ENCODE measurements at regions of chr6 and their contacts with region 1.

Region 1: DNA sequence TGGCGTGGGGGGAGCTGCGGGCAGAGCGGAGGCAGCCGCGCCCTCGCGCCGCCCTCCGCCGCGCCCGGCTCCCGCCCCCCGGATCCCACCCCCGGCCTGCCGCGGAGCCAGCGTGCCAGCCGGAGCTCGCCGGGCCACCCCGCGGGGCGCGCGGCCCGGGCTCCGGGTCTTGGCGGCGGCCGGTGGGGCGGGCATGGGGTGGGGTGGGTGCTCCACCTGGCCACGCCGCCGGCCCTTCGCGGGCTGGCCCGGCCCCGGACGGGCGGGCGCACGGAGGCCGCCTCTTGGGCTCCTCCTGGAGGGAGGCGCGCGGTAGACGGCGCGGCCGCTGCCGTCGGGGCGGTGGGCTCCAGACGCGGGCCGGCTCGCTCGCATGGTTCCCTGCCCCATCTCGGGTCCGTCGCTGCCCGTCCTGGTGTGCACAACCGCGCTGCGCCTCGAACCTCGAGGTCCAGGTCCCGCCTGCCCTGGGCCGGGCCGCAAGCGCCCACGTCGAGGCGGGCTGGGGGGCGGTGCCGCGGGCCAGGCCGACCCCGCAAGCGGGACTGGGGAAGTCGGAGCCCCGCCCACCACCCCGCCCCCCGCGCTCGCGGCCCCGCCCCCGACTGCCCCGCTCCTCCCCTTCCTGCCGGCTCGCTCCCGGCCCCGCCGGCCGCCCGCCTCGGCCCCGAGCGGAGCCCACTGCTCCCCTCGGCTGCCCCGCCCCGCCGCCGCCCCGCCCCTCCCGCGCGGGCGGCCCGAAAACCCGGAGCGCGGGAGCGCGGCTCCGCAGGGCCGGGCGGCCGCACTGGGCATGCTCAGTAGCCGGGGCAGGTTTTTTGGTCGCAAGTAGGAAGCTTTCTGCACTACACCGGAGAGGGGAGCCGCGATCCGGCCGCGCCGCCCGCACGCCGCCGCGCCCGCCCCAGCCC is at the start of gene CDYL:
- DNase-seq: peak; percentile 93
- H3K4me3 ChIP-seq: peak within 1 kb of the TSS; percentile 64 to 79 (median 72)
- H3K27ac ChIP-seq: peak within 1 kb of the TSS; percentile 83 to 88 (median 86)
- H3K4me1 ChIP-seq: peaks cover 0 to 25% (median 20%) of the 10 kb centered on the region in 4 donors
- H3K27me3 ChIP-seq: no peaks in the 10 kb centered on the region
- CTCF ChIP-seq: peak in 1 of 4 experiments; percentile 30
- EP300 ChIP-seq: no peak
- POLR2A ChIP-seq: no peak
- total RNA-seq, gene CDYL: 37.9 to 82.8 (median 56.5) TPM

Region 2: DNA sequence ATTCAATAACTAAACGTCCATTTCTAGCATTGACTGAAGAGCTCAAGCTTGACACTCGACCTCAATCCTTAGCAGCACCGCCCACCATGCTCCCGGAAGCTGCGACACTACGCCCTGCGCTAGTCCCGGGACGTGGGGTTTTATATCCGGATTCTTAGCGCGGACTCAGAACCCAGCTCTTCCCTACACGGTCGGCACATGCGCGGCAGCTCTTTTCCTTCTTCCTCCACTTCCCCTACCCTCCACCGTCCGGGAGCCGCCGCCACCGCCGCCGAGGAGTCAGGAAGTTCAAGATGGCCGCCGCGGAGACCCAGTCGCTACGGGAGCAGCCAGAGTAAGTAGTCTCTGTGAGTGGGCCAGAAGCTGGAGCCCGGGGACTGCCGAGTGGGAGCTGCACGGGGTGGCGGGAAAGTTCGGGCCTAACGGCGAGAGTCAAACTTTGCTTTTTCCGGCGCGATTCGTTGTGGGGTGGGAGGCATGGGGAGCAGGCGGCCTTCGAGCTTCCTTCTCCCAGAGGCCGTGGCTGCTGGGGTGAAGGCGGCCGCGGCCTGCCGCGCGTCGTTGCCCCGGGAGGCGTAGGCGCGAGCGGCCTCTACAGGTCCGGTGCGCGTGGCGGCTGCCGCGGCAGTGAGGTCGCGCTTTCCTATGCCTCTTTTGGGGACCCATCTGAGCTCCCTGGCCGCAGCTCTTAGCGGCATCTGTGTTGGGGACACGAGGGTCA is 754.5 kb before region 1 on chr6:
- intact Hi-C with region 1: loop called (anchors 10 kb)
- DNase-seq: peak; percentile 98
- H3K4me3 ChIP-seq: peak overlapping the region; percentile 63 to 91 (median 80)
- H3K27ac ChIP-seq: peak overlapping the region; percentile 94 to 98 (median 98)
- H3K4me1 ChIP-seq: peaks cover 0 to 72% (median 67%) of the 10 kb centered on the region in 4 donors
- H3K27me3 ChIP-seq: no peaks in the 10 kb centered on the region
- CTCF ChIP-seq: peak in 2 of 4 experiments; percentile 10 to 36
- EP300 ChIP-seq: peak in 1 of 4 donors; percentile 34
- POLR2A ChIP-seq: peak; percentile 52 to 75

Region 3: GRCh38 chr6:4351520-4352315 is 424.1 kb before region 1 on chr6:
- intact Hi-C with region 1: loop called (anchors 2 kb)
- DNase-seq: peak; percentile 93
- H3K4me3 ChIP-seq: peak overlapping the region in 2 of 4 donors; percentile 13 to 28
- H3K27ac ChIP-seq: peak overlapping the region; percentile 82 to 88 (median 84)
- H3K4me1 ChIP-seq: peaks cover 0 to 56% (median 53%) of the 10 kb centered on the region in 4 donors
- H3K27me3 ChIP-seq: no peaks in the 10 kb centered on the region
- CTCF ChIP-seq: no peak
- EP300 ChIP-seq: peak in 3 of 4 donors; percentile 4 to 75 (median 42)
- POLR2A ChIP-seq: no peak

Region 4: GRCh38 chr6:4936681-4937041 is 160.8 kb after region 1 on chr6:
- intact Hi-C with region 1: loop called (anchors 10 kb)
- DNase-seq: no peak
- H3K4me3 ChIP-seq: no peak overlapping the region
- H3K27ac ChIP-seq: no peak overlapping the region
- H3K4me1 ChIP-seq: peaks cover 0 to 15% (median 9%) of the 10 kb centered on the region in 4 donors
- H3K27me3 ChIP-seq: no peaks in the 10 kb centered on the region
- CTCF ChIP-seq: peak in 3 of 4 experiments; percentile 31 to 52 (median 48)
- EP300 ChIP-seq: no peak
- POLR2A ChIP-seq: no peak

Region 5: DNA sequence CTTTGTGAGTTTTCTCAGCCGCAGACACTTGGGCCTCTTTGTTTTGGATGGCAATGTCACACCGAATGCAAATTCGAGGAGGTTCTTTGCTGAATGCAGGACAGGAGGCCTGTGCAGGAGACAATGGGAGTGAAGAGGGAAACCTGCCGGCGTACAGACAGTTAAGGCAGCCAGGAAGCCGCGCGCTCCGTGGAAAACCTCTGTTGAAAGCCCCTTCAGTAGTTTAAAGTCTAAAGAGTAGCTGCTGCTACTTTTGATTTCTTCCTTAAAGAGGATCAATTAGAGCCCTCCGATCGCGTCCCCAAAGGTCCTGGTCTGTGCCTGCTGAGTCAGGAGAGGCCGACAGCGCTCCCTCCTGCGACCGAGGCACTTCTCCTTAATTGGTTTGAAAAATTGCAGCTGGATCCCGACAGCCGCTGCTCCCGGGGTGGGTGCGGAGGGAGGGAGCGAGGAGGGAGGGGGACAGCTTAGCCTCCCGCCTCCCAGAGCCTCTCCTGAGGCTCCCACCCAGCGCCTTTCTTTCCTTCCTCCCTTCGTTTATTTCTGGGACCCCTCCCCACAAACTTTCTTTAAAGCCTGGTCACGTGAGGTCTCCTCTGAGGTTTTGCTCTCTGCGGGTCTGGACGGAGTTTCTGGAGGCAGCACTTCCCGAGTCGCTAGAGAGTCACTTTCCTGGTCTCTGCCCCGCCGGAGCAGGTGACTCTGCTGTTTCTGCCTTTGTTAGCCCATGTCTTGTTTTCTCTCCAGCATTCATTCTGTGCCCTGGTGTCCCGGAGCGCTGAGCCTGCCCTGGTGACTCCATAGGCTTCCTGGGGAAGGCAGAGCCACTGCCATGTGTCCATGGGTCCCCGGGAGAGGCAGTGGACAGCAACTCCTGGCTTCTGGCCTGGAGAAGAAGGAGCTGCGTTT is 250.3 kb after region 1 on chr6:
- intact Hi-C with region 1: loop called (anchors 5 kb)
- DNase-seq: peak; percentile 91
- H3K4me3 ChIP-seq: peak overlapping the region; percentile 50 to 60 (median 60)
- H3K27ac ChIP-seq: peak overlapping the region; percentile 88 to 93 (median 92)
- H3K4me1 ChIP-seq: peaks cover 0 to 21% (median 16%) of the 10 kb centered on the region in 4 donors
- H3K27me3 ChIP-seq: no peaks in the 10 kb centered on the region
- CTCF ChIP-seq: no peak
- EP300 ChIP-seq: no peak
- POLR2A ChIP-seq: peak; percentile 56 to 70